ENCODE measurements at regions of chr2 and their contacts with region 1.

Region 1: DNA sequence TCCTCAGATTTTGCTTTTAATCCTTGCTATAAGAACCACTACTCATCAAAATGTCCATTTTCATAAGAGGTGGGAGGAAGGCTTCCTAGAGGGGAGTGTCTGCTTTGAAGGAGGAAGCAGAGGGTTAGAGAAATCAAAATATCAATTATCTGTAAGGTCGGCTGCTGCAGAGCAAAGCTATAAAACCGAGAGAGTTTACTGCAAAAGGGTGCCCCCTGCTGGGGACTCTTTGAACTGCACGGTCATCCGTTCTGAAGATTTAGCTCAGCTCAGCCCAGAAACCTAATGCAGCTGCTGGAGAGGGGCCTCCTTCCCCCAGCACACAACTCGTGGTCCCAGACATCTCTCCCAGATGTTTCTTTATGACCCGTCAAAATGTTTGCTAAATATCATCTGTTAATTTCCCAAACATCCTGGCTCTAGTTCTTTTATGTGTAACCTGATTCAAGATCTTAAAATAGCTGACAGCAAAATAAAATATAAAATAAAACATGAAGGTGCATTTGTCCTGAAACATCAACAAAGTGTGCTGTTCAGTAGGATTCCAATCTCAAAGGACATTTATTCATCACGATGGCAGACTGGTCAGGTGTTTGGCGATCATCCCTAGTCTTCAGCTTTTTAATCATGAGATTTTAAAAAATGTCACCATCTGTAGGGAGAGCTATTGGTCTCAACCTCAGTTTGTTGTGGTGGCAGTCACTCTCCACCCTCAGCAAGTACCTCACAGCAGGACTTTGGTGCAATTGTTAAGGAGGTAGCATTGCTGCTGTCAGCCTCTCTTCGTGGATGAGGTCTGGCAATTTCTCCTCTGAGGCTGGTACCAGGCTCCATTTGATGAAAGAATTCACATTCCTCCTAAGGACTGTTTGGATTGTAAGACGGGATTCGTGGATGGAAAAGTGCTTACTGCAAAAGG is 185.9 kb downstream of the MTX2 start:
- DNase-seq: no peak
- H3K4me3 ChIP-seq: no peak overlapping the region
- CTCF ChIP-seq: peak; percentile 71

Region 2: GRCh38 chr2:176126929-176127773 is 328.0 kb before region 1 on chr2:
- CTCF ChIA-PET with region 1: interaction called, 103 read pairs
- POLR2A ChIA-PET with region 1: no interaction called
- DNase-seq: no peak
- H3K4me3 ChIP-seq: peak overlapping the region; percentile 13
- CTCF ChIP-seq: peak; percentile 57

Region 3: DNA sequence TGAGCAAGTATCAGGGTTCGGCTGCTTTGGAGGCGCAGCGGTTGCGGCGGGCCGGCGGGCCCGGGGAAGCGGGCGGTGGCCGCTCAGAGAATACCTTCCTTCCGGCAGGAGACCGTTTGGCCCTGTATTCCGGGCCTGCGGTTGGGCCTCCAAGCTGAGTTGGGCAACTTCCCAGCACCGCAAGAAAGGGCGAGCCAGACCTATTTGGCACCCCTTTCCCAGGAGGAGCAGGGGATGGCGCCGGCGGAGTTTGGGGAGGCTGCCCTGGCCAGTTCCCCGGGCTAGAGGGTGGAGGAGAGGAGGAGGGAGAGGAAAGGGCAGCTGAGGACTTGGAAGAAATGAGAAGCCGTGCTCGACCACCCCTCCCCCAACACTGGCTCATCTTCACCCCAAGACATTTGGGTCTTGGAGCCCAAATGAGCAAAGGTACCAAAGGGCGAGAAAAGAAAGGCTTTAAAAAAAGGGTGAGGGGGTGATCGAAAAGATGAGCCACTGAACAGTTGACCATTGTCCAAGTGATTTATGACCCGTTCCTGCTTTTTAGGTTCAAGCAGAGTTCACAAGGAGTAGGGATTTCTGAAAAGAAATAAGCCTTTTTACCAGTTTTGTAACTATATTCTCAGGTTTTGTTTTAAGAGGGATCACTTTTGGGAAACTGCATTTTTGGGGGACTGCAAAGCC is 289.6 kb before region 1 on chr2:
- CTCF ChIA-PET with region 1: interaction called, 50 read pairs
- POLR2A ChIA-PET with region 1: no interaction called
- DNase-seq: no peak
- H3K4me3 ChIP-seq: no peak overlapping the region
- CTCF ChIP-seq: no peak

Region 4: DNA sequence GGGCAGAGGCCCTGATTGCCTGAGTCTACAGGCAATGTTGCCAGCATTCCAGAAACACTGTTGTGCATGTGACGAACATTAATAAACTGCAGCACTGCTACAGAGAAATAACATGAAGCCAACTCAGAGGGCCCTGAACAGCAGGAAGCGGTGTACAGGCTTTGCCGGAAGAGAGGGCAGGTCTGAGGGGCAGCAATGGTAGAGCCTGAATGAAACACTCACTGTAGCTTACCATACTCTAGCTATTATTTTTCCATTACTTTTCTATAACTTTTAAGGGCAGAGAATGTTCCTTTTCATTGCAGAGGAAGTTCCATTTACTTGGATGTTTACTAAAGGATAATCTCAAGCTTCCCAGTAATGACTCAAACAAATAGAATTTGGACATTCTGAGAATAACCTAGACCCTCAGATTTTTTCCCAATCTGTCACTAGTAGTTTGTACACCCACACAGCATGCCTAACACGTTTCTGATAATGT is 35.5 kb before region 1 on chr2:
- CTCF ChIA-PET with region 1: interaction called, 11 read pairs
- POLR2A ChIA-PET with region 1: no interaction called
- DNase-seq: peak; percentile 52
- H3K4me3 ChIP-seq: no peak overlapping the region
- CTCF ChIP-seq: no peak

Region 5: GRCh38 chr2:176479961-176480360 is 24.8 kb after region 1 on chr2:
- CTCF ChIA-PET with region 1: interaction called, 38 read pairs
- POLR2A ChIA-PET with region 1: no interaction called
- DNase-seq: no peak
- H3K4me3 ChIP-seq: no peak overlapping the region
- CTCF ChIP-seq: no peak

Region 6: DNA sequence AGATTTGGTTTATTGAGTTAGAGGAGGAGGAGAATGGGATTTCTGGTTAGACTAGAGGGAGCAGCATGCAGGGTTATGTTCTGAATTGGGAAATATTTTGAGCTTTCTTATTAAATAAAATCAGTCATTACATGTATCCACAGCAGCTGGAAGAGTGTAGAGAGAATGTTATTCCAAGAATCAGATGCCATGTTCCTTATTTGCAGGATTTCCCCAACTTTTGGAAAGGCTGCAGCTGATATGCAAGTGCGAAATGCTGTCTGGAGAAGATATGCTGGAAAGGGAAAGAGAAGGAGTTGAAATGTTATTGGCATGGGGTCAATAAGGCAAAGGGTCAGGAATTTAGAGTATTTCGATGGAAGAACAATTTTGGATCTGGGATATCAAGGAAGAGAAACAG is 69.9 kb after region 1 on chr2:
- CTCF ChIA-PET with region 1: no interaction called
- POLR2A ChIA-PET with region 1: no interaction called
- DNase-seq: no peak
- H3K4me3 ChIP-seq: no peak overlapping the region
- CTCF ChIP-seq: no peak

Region 7: GRCh38 chr2:176638167-176639015 is 183.2 kb after region 1 on chr2:
- CTCF ChIA-PET with region 1: interaction called, 50 read pairs
- POLR2A ChIA-PET with region 1: interaction called, 3 read pairs
- DNase-seq: no peak
- H3K4me3 ChIP-seq: peak overlapping the region; percentile 66
- CTCF ChIP-seq: peak; percentile 67

Region 8: GRCh38 chr2:176848844-176849243 is 393.7 kb after region 1 on chr2:
- CTCF ChIA-PET with region 1: no interaction called
- POLR2A ChIA-PET with region 1: no interaction called
- DNase-seq: no peak
- H3K4me3 ChIP-seq: no peak overlapping the region
- CTCF ChIP-seq: no peak

Region 9: GRCh38 chr2:177161744-177162460 is 706.8 kb after region 1 on chr2:
- CTCF ChIA-PET with region 1: no interaction called
- POLR2A ChIA-PET with region 1: no interaction called
- DNase-seq: no peak
- H3K4me3 ChIP-seq: no peak overlapping the region
- CTCF ChIP-seq: peak; percentile 41